A673 (cell line): ENCODE measurements at regions of chr21 and their contacts with region 1.

Region 1: GRCh38 chr21:44510508-44511210 is 29.3 kb downstream of the KRTAP10-1 start:
- DNase-seq: peak; percentile 73
- H3K4me3 ChIP-seq: peak overlapping the region; percentile 16
- H3K27ac ChIP-seq: no peak overlapping the region
- H3K4me1 ChIP-seq: no peaks in the 10 kb centered on the region
- H3K27me3 ChIP-seq: no peaks in the 10 kb centered on the region
- CTCF ChIP-seq: peak; percentile 94

Region 2: GRCh38 chr21:44444286-44444931 is 66.2 kb before region 1 on chr21:
- CTCF ChIA-PET with region 1: no interaction called
- POLR2A ChIA-PET with region 1: no interaction called
- intact Hi-C with region 1: no loop called
- DNase-seq: no peak
- H3K4me3 ChIP-seq: no peak overlapping the region
- H3K27ac ChIP-seq: no peak overlapping the region
- H3K4me1 ChIP-seq: no peaks in the 10 kb centered on the region
- H3K27me3 ChIP-seq: peaks cover 10% of the 10 kb centered on the region
- CTCF ChIP-seq: peak; percentile 51; the same call in 1 of the 2 replicates

Region 3: DNA sequence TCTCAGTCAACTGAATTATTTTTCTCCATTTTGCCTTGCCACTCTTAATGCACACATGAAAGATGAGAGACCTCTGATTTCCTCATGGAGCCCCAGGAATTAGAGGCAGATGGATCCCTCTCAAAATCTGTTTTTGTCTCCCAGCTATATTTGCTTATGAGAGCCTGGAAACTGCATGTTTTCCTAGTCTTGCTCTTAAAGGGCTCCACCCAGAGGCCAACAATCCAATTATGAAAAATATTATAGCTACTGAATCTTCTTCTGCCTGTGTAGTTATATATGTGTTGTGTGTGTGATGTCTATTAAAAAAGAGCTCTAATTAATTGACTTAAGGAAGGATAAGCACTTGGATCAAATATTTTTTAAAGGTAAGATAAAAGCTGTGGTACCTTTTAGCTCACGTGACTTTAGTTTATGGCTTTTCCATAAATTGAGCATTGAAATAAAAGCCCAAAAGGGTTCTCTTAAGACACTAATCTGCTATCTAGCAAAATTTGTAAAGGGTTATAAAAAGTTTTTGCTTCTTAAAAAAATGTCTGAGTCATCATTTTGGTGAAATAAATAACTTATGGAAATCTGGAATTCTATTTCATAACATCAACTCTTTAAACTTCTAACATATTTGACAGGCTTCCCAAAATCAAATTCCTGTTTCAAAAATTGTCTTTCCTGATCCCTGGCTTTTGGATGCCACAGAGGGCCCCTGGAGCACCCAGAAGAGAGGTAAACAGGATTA is 231.9 kb after region 1 on chr21:
- CTCF ChIA-PET with region 1: interaction called, 13 read pairs
- POLR2A ChIA-PET with region 1: no interaction called
- intact Hi-C with region 1: loop called (anchors 5 kb)
- DNase-seq: peak; percentile 56
- H3K4me3 ChIP-seq: no peak overlapping the region
- H3K27ac ChIP-seq: peak overlapping the region; percentile 53
- H3K4me1 ChIP-seq: peaks cover 15% of the 10 kb centered on the region
- H3K27me3 ChIP-seq: no peaks in the 10 kb centered on the region
- CTCF ChIP-seq: peak; percentile 56

Region 4: GRCh38 chr21:44792702-44793591 is 282.3 kb after region 1 on chr21:
- CTCF ChIA-PET with region 1: interaction called, 12 read pairs
- POLR2A ChIA-PET with region 1: no interaction called
- intact Hi-C with region 1: loop called (anchors 2 kb)
- DNase-seq: peak; percentile 86
- H3K4me3 ChIP-seq: no peak overlapping the region
- H3K27ac ChIP-seq: peak overlapping the region; percentile 24
- H3K4me1 ChIP-seq: peaks cover 10% of the 10 kb centered on the region
- H3K27me3 ChIP-seq: no peaks in the 10 kb centered on the region
- CTCF ChIP-seq: peak; percentile 85